Mammary epithelial cell (primary cell): ENCODE measurements at regions of chr2 and their contacts with region 1.

Region 1: GRCh38 chr2:205680067-205680466 is 2.2 kb upstream of the NRP2 start:
- DNase-seq: peak; percentile 77
- H3K4me3 ChIP-seq: no peak overlapping the region
- H3K27ac ChIP-seq: peak overlapping the region; percentile 93
- H3K4me1 ChIP-seq: peaks cover 60% of the 10 kb centered on the region
- H3K27me3 ChIP-seq: no peaks in the 10 kb centered on the region
- CTCF ChIP-seq: peak; percentile 69 to 75

Region 2: DNA sequence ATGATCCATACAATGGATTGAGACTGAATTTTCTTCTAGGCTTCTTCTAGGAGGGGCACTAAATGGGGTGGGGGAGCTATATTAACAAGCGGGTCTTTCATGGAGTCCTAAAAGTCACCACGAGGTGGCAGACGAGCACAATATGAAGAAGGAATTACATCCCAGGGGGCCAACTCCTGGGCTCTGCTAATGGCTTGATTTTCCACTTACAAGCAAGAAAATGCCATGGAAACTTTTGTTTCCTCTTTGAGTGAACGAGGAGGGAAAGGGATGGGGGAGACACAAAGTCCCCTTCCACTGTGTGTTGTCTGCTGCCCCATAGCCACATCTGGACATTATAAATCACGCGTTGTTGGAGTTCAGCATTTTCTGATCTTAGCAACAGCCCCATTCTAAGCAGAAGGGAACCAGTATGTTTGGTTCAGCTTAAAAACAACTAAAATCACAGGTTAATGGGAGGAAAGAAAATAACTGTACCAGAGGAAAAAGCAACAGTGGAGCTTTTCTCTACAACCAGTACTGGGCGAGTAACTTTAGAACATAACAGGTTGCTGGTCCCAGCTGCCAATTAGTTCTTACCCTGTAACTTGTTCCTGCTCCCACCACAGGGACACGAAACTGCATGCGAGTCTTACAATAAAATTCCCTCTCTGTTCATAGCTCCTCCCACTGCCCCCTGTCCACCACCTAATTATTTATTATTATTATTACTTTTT is 1419.7 kb before region 1 on chr2:
- CTCF ChIA-PET with region 1: no interaction called
- dilution Hi-C with region 1: no loop called
- in situ Hi-C with region 1: no loop called
- intact Hi-C with region 1: loop called (anchors 2 kb)
- DNase-seq: peak; percentile 19
- H3K4me3 ChIP-seq: no peak overlapping the region
- H3K27ac ChIP-seq: no peak overlapping the region
- H3K4me1 ChIP-seq: peaks cover 4% of the 10 kb centered on the region
- H3K27me3 ChIP-seq: no peaks in the 10 kb centered on the region
- CTCF ChIP-seq: peak; percentile 65 to 76

Region 3: DNA sequence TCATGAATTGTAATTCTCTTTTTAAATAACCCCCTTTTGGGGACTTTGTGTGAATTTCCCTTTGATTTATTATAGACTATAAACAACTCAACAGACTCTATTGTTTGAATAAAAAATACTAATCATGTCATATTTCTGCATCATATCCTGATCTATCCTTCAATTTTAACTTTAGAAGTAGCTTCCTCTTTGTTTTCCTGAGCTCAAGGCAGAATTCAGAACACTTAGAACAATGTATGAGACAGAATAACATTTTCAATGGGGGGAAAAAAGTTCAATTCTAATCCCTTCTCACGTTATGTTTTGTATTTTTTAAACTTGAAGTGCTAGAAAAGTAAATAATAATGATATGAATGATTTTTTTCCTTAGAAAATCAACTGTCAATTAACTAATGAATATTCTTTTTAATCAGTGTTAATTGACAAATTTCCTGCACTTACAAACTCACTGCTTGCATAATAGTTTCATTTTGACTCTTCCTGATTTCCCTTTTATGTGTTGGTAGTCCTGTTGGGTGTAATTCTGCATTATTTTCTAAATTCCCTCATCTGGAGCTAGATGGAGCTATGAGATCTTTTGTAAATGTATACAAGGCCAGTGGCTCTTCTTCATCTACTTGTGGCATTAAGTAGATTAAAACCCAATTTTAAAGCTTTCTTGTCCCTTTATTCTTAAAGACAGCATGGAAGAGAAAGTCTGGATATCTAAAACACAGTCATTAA is 808.7 kb before region 1 on chr2:
- CTCF ChIA-PET with region 1: no interaction called
- dilution Hi-C with region 1: no loop called
- in situ Hi-C with region 1: no loop called
- intact Hi-C with region 1: loop called (anchors 5 kb)
- DNase-seq: peak; percentile 11
- H3K4me3 ChIP-seq: no peak overlapping the region
- H3K27ac ChIP-seq: no peak overlapping the region
- H3K4me1 ChIP-seq: no peaks in the 10 kb centered on the region
- H3K27me3 ChIP-seq: no peaks in the 10 kb centered on the region
- CTCF ChIP-seq: peak in 1 of 2 donors; percentile 42

Region 4: DNA sequence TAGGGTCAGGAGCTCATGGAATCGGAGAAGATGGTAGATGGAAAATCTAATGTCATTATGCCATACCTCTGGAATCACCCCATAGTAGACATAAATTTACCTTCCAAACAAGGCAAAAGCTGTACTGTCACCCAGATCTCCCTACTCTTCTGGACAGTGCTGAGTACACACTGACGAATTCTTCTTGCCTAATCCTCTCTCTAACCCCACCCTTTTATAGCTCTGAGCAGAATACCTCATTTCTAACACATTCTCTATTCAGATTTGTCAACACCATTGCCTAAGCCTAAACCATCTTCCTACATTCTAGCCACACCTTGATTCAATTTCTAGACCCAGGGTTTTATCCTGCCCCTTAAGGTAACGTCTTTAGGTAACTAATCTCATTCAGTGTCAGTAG is 318.8 kb before region 1 on chr2:
- CTCF ChIA-PET with region 1: no interaction called
- dilution Hi-C with region 1: no loop called
- in situ Hi-C with region 1: no loop called
- intact Hi-C with region 1: loop called (anchors 10 kb)
- DNase-seq: peak; percentile 75
- H3K4me3 ChIP-seq: no peak overlapping the region
- H3K27ac ChIP-seq: peak overlapping the region; percentile 30
- H3K4me1 ChIP-seq: peaks cover 26% of the 10 kb centered on the region
- H3K27me3 ChIP-seq: no peaks in the 10 kb centered on the region
- CTCF ChIP-seq: no peak

Region 5: GRCh38 chr2:205564346-205565151 is 115.5 kb before region 1 on chr2:
- CTCF ChIA-PET with region 1: no interaction called
- dilution Hi-C with region 1: no loop called
- in situ Hi-C with region 1: no loop called
- intact Hi-C with region 1: loop called (anchors 5 kb)
- DNase-seq: no peak
- H3K4me3 ChIP-seq: no peak overlapping the region
- H3K27ac ChIP-seq: no peak overlapping the region
- H3K4me1 ChIP-seq: no peaks in the 10 kb centered on the region
- H3K27me3 ChIP-seq: no peaks in the 10 kb centered on the region
- CTCF ChIP-seq: no peak

Region 6: DNA sequence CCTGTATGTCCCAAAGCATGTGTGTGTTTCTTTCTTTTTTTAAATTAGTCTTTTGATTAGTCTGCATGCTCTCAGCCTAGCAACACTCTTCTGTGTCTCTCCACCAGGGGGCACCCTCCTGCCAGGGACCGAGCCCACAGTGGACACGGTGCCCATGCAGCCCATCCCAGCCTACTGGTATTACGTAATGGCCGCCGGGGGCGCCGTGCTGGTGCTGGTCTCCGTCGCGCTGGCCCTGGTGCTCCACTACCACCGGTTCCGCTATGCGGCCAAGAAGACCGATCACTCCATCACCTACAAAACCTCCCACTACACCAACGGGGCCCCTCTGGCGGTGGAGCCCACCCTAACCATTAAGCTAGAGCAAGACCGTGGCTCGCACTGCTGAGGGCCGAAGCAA is 96.1 kb after region 1 on chr2:
- CTCF ChIA-PET with region 1: no interaction called
- dilution Hi-C with region 1: no loop called
- in situ Hi-C with region 1: no loop called
- intact Hi-C with region 1: loop called (anchors 2 kb)
- DNase-seq: no peak
- H3K4me3 ChIP-seq: no peak overlapping the region
- H3K27ac ChIP-seq: peak overlapping the region; percentile 87
- H3K4me1 ChIP-seq: peaks cover 48% of the 10 kb centered on the region
- H3K27me3 ChIP-seq: no peaks in the 10 kb centered on the region
- CTCF ChIP-seq: peak; percentile 34 to 54

Region 7: GRCh38 chr2:205925373-205926337 is 245.6 kb after region 1 on chr2:
- CTCF ChIA-PET with region 1: interaction called, 3 read pairs
- dilution Hi-C with region 1: no loop called
- in situ Hi-C with region 1: no loop called
- intact Hi-C with region 1: loop called (anchors 1 kb)
- DNase-seq: peak; percentile 48
- H3K4me3 ChIP-seq: peak overlapping the region; percentile 6 to 44 (median 27)
- H3K27ac ChIP-seq: no peak overlapping the region
- H3K4me1 ChIP-seq: peaks cover 9% of the 10 kb centered on the region
- H3K27me3 ChIP-seq: peaks cover 3% of the 10 kb centered on the region
- CTCF ChIP-seq: peak; percentile 64 to 98